ENCODE measurements at regions of chr18 and their contacts with region 1.

Region 1: GRCh38 chr18:37476182-37476581 is 89.4 kb downstream of the CELF4 start:
- DNase-seq: no peak
- H3K4me3 ChIP-seq: no peak overlapping the region
- H3K27me3 ChIP-seq: peaks cover 5% of the 10 kb centered on the region
- CTCF ChIP-seq: peak; percentile 73

Region 2: DNA sequence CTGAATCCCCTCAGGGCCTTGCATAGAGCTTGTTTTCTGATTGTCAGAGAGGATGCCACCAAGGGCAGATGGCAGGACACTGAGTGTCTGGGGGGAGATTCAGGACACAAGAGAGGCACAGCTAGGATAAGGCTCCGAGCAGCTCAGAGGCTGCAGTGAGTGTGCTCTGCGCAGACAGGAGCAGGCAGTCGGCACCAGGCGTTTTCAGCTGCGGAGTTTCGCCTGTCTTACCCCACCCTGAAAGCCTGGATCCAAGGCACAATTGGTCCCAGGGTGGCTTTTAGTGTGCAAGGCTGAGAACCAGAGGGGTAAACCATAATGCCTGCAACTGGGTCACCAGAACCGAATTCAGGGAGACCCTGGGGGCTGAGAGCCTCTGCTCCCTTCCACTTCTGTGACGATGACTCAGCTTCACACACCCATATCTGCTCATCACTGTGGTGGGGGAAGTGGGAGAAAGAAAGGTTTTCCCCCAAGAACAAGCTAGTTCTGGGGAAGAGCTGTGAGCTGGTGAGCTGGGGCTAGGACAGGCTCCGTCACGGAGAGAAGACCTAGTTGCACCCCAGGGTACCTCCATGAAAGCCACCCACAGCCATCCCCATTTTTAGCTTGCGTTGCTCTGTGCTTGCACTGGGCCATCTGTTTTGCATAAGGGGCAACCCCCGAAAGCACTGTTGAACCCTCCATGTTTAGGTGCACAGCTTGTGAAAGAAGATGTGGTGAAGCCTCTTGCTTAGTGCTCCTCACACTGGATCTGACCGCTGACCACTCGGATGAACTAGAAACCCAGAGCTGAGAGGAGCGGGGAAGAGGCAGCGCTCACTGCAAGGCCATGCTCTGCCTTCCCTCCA is 84.3 kb before region 1 on chr18:
- CTCF ChIA-PET with region 1: interaction called, 37 read pairs
- POLR2A ChIA-PET with region 1: no interaction called
- DNase-seq: no peak
- H3K4me3 ChIP-seq: no peak overlapping the region
- H3K27me3 ChIP-seq: no peaks in the 10 kb centered on the region; the same call in 1 of the 2 replicates
- CTCF ChIP-seq: no peak

Region 3: DNA sequence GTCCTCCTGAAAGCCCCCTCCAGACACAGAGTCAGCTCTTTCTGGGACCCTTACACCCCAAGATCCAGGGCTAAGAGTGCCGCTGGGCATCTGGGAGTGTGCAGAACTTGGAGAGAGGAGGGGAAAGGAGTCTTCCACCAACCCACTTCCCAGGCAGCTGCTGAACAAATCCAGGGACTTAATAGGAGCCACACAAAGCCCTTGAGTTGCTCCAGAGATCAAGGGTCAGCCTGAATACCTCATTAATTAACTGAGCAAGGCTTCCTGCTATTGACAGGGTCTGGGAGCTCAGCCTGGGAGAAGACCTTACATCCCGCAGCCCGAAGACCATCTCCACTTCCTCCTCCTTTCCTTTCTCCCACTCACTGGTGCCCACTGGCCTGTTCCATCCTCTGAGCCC is 18.8 kb before region 1 on chr18:
- CTCF ChIA-PET with region 1: interaction called, 17 read pairs
- POLR2A ChIA-PET with region 1: no interaction called
- DNase-seq: no peak
- H3K4me3 ChIP-seq: no peak overlapping the region
- H3K27me3 ChIP-seq: peaks cover 8% of the 10 kb centered on the region
- CTCF ChIP-seq: no peak

Region 4: GRCh38 chr18:37491526-37491925 is 15.3 kb after region 1 on chr18:
- CTCF ChIA-PET with region 1: no interaction called
- POLR2A ChIA-PET with region 1: no interaction called
- DNase-seq: no peak
- H3K4me3 ChIP-seq: no peak overlapping the region
- H3K27me3 ChIP-seq: peaks cover 14% of the 10 kb centered on the region
- CTCF ChIP-seq: no peak